ENCODE measurements at regions of chr12 and their contacts with region 1.

Region 1: GRCh38 chr12:40511341-40511740 is 180.9 kb upstream of the CNTN1 start:
- DNase-seq: no peak

Region 2: GRCh38 chr12:39892146-39892545 is 619.2 kb before region 1 on chr12:
- intact Hi-C with region 1: loop called in 1 of 2 experiments (anchors 5 kb)
- DNase-seq: no peak